ENCODE measurements at regions of chr17 and their contacts with region 1.

Region 1: DNA sequence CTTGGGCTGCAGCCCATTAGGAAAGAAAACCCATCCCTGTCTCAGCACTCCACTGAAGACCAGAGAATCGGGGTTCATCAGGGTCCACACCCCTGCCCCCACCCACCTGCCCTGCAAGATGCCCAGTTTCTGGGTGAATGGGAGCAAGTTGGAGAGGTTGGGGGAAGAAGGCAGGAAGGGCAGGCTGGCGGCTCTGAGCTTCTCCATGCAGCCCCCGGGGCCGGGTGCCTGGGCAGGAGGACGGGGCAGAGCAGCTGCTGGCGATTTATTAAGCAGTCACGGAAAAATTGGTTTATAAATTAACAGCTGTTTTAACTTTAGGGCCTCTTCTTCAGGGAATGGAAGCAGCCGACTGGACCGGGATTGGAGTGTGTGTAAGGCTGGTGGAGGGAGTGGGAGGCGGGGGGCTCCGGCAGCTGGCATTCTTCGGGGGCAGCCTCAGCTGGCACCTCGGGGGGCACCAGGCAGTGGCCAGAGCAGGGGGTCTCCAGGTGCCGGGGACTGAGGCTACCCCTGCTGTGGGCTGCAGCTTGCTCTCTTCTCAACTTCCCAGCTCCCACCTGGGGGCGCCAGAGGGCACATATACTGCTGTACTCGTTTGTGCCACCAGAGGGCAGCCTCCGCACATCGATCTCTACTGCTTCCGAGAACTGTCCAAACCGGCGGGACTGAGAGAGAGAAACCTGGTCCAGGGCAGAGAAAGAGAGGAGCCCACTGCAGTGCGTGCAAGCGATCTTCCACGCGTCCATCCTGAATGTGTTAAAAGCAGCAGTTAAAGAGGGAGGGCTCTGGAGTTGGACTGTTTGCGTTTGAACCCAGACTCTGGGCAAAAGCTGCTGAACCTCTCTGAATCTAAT is 5.0 kb upstream of the PPP1R1B start:
- DNase-seq: peak; percentile 69 to 79
- ATAC-seq: peak; percentile 88 to 89
- H3K4me3 ChIP-seq: no peak overlapping the region
- H3K27ac ChIP-seq: no peak overlapping the region
- H3K4me1 ChIP-seq: peaks cover 5 to 8% of the 10 kb centered on the region in 2 donors
- H3K27me3 ChIP-seq: peaks cover 14 to 32% (median 21%) of the 10 kb centered on the region in 3 donors
- CTCF ChIP-seq: peak; percentile 97 to 99 (median 99)
- POLR2A ChIP-seq: no peak

Region 2: GRCh38 chr17:39547713-39548478 is 73.9 kb before region 1 on chr17:
- in situ Hi-C with region 1: loop called in 1 of 4 experiments (anchors 10 kb)
- intact Hi-C with region 1: loop called (anchors 1 kb)
- DNase-seq: peak; percentile 9 to 46
- ATAC-seq: peak; percentile 59
- H3K4me3 ChIP-seq: no peak overlapping the region
- H3K27ac ChIP-seq: no peak overlapping the region
- H3K4me1 ChIP-seq: peaks cover 0 to 9% of the 10 kb centered on the region in 2 donors
- H3K27me3 ChIP-seq: no peaks in the 10 kb centered on the region
- CTCF ChIP-seq: peak; percentile 67 to 93 (median 85)
- POLR2A ChIP-seq: no peak

Region 3: DNA sequence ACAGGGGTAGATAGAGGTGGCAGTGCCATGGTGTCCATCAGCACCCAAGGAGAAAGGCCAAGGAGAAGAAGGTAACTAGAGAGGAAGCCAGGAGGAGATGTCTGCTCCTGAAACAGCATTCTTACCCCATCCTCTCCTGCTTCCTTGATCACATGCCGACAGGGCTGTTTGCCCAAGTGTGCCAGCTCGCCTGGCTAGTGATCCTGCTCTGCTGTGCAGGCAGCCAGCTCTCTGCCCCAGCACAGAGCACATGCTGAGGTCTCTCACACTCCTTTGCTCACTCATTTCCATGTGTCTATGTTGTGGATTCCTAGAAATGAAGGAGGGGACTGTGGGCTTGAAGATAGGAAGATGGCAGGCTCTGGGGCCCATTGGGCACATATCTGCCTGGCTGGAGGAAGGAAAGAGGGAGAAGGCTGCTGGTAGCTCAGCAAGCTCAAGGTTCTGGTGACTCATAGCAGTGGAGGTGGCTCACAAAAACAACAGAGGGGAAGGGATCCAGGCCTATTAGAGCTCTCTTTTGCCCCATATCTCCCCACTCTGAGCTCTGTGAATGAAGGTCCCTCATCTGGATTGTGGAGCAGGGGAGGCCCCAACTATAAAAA is 68.3 kb before region 1 on chr17:
- in situ Hi-C with region 1: loop called in 1 of 4 experiments (anchors 10 kb)
- intact Hi-C with region 1: loop called (anchors 1 kb)
- DNase-seq: no peak
- ATAC-seq: no peak
- H3K4me3 ChIP-seq: no peak overlapping the region
- H3K27ac ChIP-seq: no peak overlapping the region
- H3K4me1 ChIP-seq: peaks cover 0 to 5% of the 10 kb centered on the region in 2 donors
- H3K27me3 ChIP-seq: no peaks in the 10 kb centered on the region
- CTCF ChIP-seq: no peak
- POLR2A ChIP-seq: no peak

Region 4: GRCh38 chr17:39636927-39637736 is 15.4 kb after region 1 on chr17 and contains the start of gene STARD3:
- in situ Hi-C with region 1: no loop called
- intact Hi-C with region 1: loop called (anchors 2 kb)
- DNase-seq: peak; percentile 84 to 89
- ATAC-seq: peak; percentile 92 to 93
- H3K4me3 ChIP-seq: peak within 1 kb of the TSS; percentile 76 to 97 (median 92)
- H3K27ac ChIP-seq: peak within 1 kb of the TSS; percentile 93 to 99 (median 94)
- H3K4me1 ChIP-seq: peaks cover 41 to 48% of the 10 kb centered on the region in 2 donors
- H3K27me3 ChIP-seq: no peaks in the 10 kb centered on the region
- CTCF ChIP-seq: peak in 3 of 5 experiments; percentile 16 to 44 (median 26)
- POLR2A ChIP-seq: peak; percentile 46 to 56
- total RNA-seq, gene STARD3: 31.0 to 41.7 (median 41.0) TPM

Region 5: GRCh38 chr17:39668199-39668966 is 46.6 kb after region 1 on chr17 and contains the start of gene PNMT:
- in situ Hi-C with region 1: loop called in 1 of 4 experiments (anchors 5 kb)
- intact Hi-C with region 1: loop called (anchors 2 kb)
- DNase-seq: peak in 1 of 2 donors; percentile 75
- ATAC-seq: no peak
- H3K4me3 ChIP-seq: peak within 1 kb of the TSS; percentile 52 to 62 (median 59)
- H3K27ac ChIP-seq: peak within 1 kb of the TSS; percentile 96 to 99 (median 98)
- H3K4me1 ChIP-seq: peaks cover 47 to 64% of the 10 kb centered on the region in 2 donors
- H3K27me3 ChIP-seq: no peaks in the 10 kb centered on the region
- CTCF ChIP-seq: peak; percentile 65 to 80 (median 77)
- POLR2A ChIP-seq: peak in 1 of 2 donors; percentile 32
- total RNA-seq, gene PNMT: 2.0 to 11.8 (median 7.1) TPM

Region 6: DNA sequence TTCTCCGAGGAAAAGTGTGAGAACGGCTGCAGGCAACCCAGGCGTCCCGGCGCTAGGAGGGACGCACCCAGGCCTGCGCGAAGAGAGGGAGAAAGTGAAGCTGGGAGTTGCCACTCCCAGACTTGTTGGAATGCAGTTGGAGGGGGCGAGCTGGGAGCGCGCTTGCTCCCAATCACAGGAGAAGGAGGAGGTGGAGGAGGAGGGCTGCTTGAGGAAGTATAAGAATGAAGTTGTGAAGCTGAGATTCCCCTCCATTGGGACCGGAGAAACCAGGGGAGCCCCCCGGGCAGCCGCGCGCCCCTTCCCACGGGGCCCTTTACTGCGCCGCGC is 78.0 kb after region 1 on chr17 and contains the start of gene ERBB2:
- in situ Hi-C with region 1: no loop called
- intact Hi-C with region 1: no loop called
- DNase-seq: peak; percentile 42 to 67
- ATAC-seq: peak; percentile 82 to 87
- H3K4me3 ChIP-seq: peak within 1 kb of the TSS; percentile 65 to 83 (median 76)
- H3K27ac ChIP-seq: peak within 1 kb of the TSS; percentile 59 to 78 (median 74)
- H3K4me1 ChIP-seq: peaks cover 13 to 36% of the 10 kb centered on the region in 2 donors
- H3K27me3 ChIP-seq: no peaks in the 10 kb centered on the region
- CTCF ChIP-seq: no peak
- POLR2A ChIP-seq: peak in 1 of 2 donors; percentile 13
- total RNA-seq, gene ERBB2: 6.0 to 26.4 (median 15.3) TPM

Region 7: DNA sequence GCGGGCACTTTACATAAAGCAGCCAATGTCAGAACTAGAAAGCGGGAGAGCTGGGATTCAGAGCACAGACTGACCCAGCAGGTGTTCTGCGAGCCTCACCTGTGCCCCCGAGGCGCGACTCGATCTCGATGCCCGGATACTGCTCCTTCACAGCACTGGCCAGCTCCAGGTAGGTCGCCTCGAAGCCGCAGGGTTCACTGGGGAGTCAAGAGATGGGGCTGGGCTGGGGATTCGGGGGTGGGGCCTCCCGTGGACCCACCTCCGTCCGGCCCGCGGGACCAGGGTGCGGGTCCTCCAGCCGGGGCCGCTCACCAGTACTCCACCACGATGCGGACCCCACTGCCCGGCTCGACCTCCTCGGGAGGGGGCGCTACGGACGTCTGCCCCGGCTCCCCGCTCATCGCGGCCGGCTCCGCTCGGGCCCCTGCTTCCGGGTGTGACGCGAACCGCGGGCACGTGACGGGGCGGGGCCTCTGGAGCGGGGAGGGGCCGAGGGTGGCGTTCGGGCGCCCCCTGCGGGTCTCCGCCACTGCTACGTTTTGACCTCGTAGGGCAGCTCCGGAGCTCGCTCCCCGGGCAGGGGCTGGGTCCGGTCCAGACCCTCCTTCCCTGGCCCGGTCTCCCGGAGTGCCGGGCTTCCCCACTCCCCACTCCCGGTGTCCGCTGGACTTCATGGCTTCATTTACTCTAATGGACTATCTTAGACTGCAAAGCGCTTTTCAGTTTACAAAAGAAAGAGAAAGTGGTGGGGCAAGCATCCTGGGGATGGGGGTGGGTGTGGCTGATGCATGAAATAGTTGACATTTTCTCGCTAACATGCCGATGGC is 108.6 kb after region 1 on chr17 and contains the start of gene MIEN1:
- in situ Hi-C with region 1: no loop called
- intact Hi-C with region 1: loop called (anchors 1 kb)
- DNase-seq: peak; percentile 80 to 86
- ATAC-seq: peak; percentile 96
- H3K4me3 ChIP-seq: peak within 1 kb of the TSS; percentile 78 to 92 (median 89)
- H3K27ac ChIP-seq: peak within 1 kb of the TSS; percentile 84 to 89 (median 87)
- H3K4me1 ChIP-seq: peaks cover 7 to 9% of the 10 kb centered on the region in 2 donors
- H3K27me3 ChIP-seq: no peaks in the 10 kb centered on the region
- CTCF ChIP-seq: peak; percentile 83 to 95 (median 92)
- POLR2A ChIP-seq: peak; percentile 65 to 87
- total RNA-seq, gene MIEN1: 42.8 to 81.9 (median 67.7) TPM

Measured in gastrocnemius medialis (tissue), 4 donors.